ENCODE measurements at regions of chr11 and their contacts with region 1.

Region 1: GRCh38 chr11:108654994-108655631 is 9.8 kb upstream of the DDX10 start:
- DNase-seq: peak; percentile 46
- H3K4me3 ChIP-seq: no peak overlapping the region
- H3K27ac ChIP-seq: no peak overlapping the region
- H3K4me1 ChIP-seq: no peaks in the 10 kb centered on the region
- H3K27me3 ChIP-seq: no peaks in the 10 kb centered on the region
- CTCF ChIP-seq: peak; percentile 61 to 82

Region 2: DNA sequence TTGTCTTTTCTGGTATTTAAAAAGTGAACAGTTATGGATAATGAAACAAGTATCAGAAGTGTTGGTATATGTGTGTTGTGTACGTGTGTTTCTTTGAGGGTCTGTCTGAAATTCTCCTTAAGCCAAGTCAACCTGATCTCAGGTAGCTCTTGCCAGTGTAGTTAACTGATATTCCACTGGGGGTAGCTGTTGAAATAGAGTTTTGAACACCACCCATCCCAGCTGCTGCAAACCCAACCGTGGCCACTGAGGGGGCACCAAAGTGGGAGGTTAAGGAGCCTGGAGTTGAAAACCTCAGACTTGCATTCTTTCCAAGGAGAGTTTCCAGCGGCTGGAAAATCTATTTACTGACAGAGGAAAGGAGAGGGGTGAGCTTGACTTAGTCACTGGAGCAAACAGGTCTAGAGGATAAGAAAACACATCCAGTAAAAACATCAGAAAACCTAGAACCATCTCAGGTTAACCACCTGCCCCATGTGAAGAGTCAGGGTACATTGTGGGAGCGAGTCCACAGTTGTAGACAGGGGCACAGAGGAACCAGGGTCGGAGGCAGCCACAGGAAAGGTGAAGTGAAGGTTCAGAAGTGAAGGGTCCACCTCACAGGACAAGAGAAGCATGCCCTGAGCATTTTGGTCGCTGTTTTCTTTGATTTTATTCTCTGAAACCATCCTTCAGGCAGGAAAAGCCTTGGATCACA is 655.2 kb before region 1 on chr11:
- CTCF ChIA-PET with region 1: no interaction called
- dilution Hi-C with region 1: no loop called
- in situ Hi-C with region 1: no loop called
- intact Hi-C with region 1: loop called (anchors 1 kb)
- DNase-seq: peak; percentile 37
- H3K4me3 ChIP-seq: no peak overlapping the region
- H3K27ac ChIP-seq: no peak overlapping the region
- H3K4me1 ChIP-seq: peaks cover 3% of the 10 kb centered on the region
- H3K27me3 ChIP-seq: peaks cover 3% of the 10 kb centered on the region
- CTCF ChIP-seq: peak; percentile 54 to 59

Region 3: GRCh38 chr11:108008656-108009496 is 646.2 kb before region 1 on chr11 and contains the start of gene CUL5:
- CTCF ChIA-PET with region 1: interaction called, 20 read pairs
- dilution Hi-C with region 1: no loop called
- in situ Hi-C with region 1: no loop called
- intact Hi-C with region 1: no loop called
- DNase-seq: peak; percentile 86
- H3K4me3 ChIP-seq: peak within 1 kb of the TSS; percentile 62 to 97 (median 69)
- H3K27ac ChIP-seq: peak within 1 kb of the TSS; percentile 88
- H3K4me1 ChIP-seq: peaks cover 14% of the 10 kb centered on the region
- H3K27me3 ChIP-seq: no peaks in the 10 kb centered on the region
- CTCF ChIP-seq: peak; percentile 75 to 94
- total RNA-seq, gene CUL5: 29.8 to 36.7 TPM

Region 4: DNA sequence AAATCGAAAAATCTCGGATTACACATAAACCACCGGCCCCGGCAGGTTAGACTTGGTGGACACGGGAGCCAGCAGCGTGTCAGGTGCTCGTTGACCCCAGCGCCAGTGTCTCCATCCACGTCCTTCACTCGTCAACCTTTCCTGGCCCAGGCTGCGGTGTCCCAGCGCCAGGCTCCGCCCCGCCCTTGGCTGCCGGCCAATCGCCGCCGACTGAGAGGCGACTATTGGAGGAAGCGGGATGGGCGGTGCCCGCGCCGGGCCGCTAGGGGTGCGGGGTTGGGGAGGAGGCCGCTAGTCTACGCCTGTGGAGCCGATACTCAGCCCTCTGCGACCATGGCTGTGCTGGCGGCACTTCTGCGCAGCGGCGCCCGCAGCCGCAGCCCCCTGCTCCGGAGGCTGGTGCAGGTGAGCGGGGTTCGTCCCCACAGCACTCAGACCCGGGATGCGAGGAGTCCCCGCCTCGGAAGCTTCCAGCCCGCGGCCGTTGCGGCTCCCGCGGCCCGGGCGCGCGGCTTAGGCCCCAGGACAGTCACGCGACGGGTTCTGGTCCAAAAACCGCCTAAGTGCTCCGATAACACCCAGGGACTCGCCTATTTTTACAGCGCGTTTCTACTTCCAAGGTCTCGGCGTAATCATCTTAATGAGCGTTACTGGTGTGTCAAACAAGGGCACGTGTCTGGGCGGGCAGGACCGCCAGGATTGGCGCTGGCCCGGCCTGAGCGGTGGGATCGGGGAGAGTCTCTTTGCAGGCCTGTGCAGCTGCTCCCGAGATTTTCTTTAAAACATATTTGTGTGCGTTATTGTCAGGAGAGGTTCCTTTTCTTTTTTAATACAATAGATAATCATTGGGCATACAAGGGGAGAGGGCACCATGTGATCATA is 533.6 kb before region 1 on chr11 and contains the start of gene ACAT1:
- CTCF ChIA-PET with region 1: interaction called, 3 read pairs
- dilution Hi-C with region 1: no loop called
- in situ Hi-C with region 1: loop called (anchors 5 to 25 kb)
- intact Hi-C with region 1: loop called (anchors 1 kb)
- DNase-seq: peak; percentile 89
- H3K4me3 ChIP-seq: peak within 1 kb of the TSS; percentile 76 to 96 (median 96)
- H3K27ac ChIP-seq: peak within 1 kb of the TSS; percentile 72
- H3K4me1 ChIP-seq: peaks cover 12% of the 10 kb centered on the region
- H3K27me3 ChIP-seq: no peaks in the 10 kb centered on the region
- CTCF ChIP-seq: peak in 1 of 2 donors; percentile 21
- total RNA-seq, gene ACAT1: 35.0 to 35.6 TPM

Region 5: DNA sequence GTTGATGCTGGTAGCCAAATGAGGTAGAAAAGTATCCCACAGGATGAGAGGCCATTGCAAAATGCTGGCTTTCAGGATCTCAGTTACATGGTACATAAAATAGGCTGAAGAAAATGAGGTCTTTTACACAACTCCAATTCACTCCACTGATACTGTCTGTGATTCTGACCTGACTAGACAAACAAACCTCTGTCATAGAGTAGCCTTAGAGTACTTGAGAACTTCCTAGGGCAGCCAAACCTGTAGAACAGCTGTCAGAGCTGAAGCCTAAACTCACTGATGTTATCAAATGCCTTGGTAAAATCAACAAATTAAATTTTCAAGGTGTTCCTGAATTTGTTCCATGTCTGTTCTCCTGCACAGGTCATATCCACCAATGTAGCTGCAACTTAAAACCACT is 130.7 kb before region 1 on chr11:
- CTCF ChIA-PET with region 1: no interaction called
- dilution Hi-C with region 1: no loop called
- in situ Hi-C with region 1: no loop called
- intact Hi-C with region 1: no loop called
- DNase-seq: no peak
- H3K4me3 ChIP-seq: no peak overlapping the region
- H3K27ac ChIP-seq: no peak overlapping the region
- H3K4me1 ChIP-seq: no peaks in the 10 kb centered on the region
- H3K27me3 ChIP-seq: no peaks in the 10 kb centered on the region
- CTCF ChIP-seq: no peak

Region 6: DNA sequence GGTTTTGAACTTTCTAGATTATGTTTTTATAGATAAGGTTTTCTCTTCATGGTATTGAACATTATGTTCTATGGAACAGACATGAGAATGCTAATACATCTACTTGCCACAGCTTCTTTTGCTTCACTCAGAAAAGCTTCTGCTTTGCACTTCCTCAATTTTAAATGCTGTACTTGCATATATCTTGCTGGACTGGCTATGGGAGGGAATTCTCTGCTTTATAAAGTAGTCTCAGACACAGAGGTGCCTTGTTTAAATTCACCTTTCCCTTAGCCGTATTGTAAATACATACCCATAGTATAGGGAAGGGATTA is 183.6 kb after region 1 on chr11:
- CTCF ChIA-PET with region 1: no interaction called
- dilution Hi-C with region 1: no loop called
- in situ Hi-C with region 1: no loop called
- intact Hi-C with region 1: no loop called
- DNase-seq: no peak
- H3K4me3 ChIP-seq: no peak overlapping the region
- H3K27ac ChIP-seq: no peak overlapping the region
- H3K4me1 ChIP-seq: no peaks in the 10 kb centered on the region
- H3K27me3 ChIP-seq: no peaks in the 10 kb centered on the region
- CTCF ChIP-seq: no peak

Region 7: DNA sequence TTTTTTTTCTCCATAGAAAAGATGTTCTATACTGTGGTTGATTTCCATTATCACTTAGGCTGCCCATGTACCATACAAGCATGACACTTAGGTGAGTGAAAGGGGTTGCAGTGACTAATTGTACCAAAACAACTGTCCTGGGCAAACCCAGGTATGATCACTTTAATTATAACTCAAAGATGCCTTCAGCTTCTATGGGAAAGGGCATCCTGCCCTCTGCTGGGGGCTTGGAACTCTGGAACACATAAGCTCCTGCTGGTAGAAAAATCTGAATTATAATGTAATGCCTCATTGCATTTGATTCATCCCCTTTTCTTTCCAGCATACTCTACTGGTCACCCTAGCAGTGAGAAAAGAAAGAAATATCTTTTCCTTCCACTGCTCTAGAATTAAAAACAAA is 216.0 kb after region 1 on chr11:
- CTCF ChIA-PET with region 1: no interaction called
- dilution Hi-C with region 1: no loop called
- in situ Hi-C with region 1: no loop called
- intact Hi-C with region 1: loop called (anchors 2 kb)
- DNase-seq: peak; percentile 56
- H3K4me3 ChIP-seq: no peak overlapping the region
- H3K27ac ChIP-seq: no peak overlapping the region
- H3K4me1 ChIP-seq: peaks cover 15% of the 10 kb centered on the region
- H3K27me3 ChIP-seq: no peaks in the 10 kb centered on the region
- CTCF ChIP-seq: peak; percentile 40 to 59

Measured in mammary epithelial cell (primary cell).